IMR-90 (cell line): ENCODE measurements at regions of chr1 and their contacts with region 1.

Region 1: DNA sequence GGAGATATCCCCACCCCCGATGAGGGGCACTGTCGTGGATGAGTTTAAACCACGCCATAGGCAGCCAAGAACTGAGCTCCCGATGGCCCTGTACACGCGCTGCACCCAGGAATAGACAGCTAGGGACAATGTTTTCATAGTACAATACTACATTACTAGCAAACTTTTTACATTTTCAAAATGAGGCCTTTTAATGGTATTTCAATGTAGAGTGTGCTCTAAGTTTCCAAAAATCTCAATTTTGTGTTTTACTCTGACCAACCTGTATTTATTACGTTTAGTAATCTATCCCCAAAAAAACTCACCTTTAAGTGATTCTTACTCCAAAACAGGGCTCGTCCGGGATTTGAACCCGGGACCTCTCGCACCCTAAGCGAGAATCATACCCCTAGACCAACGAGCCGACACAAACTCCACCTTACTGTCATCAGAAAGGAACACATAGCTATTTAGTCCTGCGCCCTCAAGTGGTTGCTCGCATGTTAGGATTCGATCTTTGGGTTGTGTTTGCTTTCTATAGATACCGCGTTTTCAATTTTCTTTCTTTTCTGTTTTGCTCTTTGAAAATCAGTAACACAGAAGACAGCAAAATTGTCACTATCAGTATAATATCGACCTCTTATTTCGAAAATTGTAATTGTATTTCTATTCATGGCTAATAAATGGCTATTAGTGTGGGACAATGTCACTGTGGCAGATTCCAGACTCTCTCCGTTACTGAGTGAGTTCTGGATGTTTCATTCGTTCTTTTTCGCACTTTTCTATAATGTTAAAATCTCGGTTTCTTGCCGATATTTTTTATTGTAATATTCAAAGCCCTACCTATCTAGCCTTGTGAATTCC is 6.4 kb upstream of the MPZL1 start:
- DNase-seq: peak; percentile 83
- ATAC-seq: peak; percentile 51
- H3K4me3 ChIP-seq: peak overlapping the region; percentile 53
- H3K27ac ChIP-seq: peak overlapping the region; percentile 37
- H3K4me1 ChIP-seq: no peaks in the 10 kb centered on the region
- H3K27me3 ChIP-seq: peaks cover 2% of the 10 kb centered on the region; the same call in 1 of the 2 replicates
- CTCF ChIP-seq: peak; percentile 94
- POLR2A ChIP-seq: no peak
- RAD21 ChIP-seq: peak; percentile 46

Region 2: GRCh38 chr1:168178638-168179437 is 463.5 kb after region 1 on chr1 and contains the start of gene TIPRL:
- CTCF ChIA-PET with region 1: no interaction called
- POLR2A ChIA-PET with region 1: no interaction called
- dilution Hi-C with region 1: no loop called
- in situ Hi-C with region 1: no loop called
- intact Hi-C with region 1: loop called (anchors 5 kb)
- DNase-seq: peak; percentile 100
- ATAC-seq: peak; percentile 97
- H3K4me3 ChIP-seq: peak within 1 kb of the TSS; percentile 74
- H3K27ac ChIP-seq: peak within 1 kb of the TSS; percentile 89
- H3K4me1 ChIP-seq: no peaks in the 10 kb centered on the region
- H3K27me3 ChIP-seq: no peaks in the 10 kb centered on the region
- CTCF ChIP-seq: peak; percentile 65
- POLR2A ChIP-seq: peak; percentile 68
- RAD21 ChIP-seq: peak; percentile 31; the same call in 1 of the 2 replicates
- total RNA-seq, gene TIPRL: 15.4 and 41.1 TPM in 2 replicates